ENCODE measurements at regions of chr19 and their contacts with region 1.

Region 1: GRCh38 chr19:46487802-46488445 is 7.7 kb downstream of the PNMA8B start:
- DNase-seq: peak; percentile 83
- H3K4me3 ChIP-seq: peak overlapping the region; percentile 37
- H3K27ac ChIP-seq: no peak overlapping the region
- H3K4me1 ChIP-seq: no peaks in the 10 kb centered on the region
- H3K27me3 ChIP-seq: no peaks in the 10 kb centered on the region
- CTCF ChIP-seq: peak; percentile 97

Region 2: GRCh38 chr19:46271481-46272197 is 216.3 kb before region 1 on chr19:
- CTCF ChIA-PET with region 1: no interaction called
- POLR2A ChIA-PET with region 1: interaction called, 10 read pairs
- intact Hi-C with region 1: no loop called
- DNase-seq: no peak
- H3K4me3 ChIP-seq: no peak overlapping the region
- H3K27ac ChIP-seq: no peak overlapping the region
- H3K4me1 ChIP-seq: no peaks in the 10 kb centered on the region
- H3K27me3 ChIP-seq: no peaks in the 10 kb centered on the region
- CTCF ChIP-seq: no peak

Region 3: GRCh38 chr19:46283771-46284170 is 204.2 kb before region 1 on chr19:
- CTCF ChIA-PET with region 1: interaction called, 14 read pairs
- POLR2A ChIA-PET with region 1: no interaction called
- intact Hi-C with region 1: loop called (anchors 10 kb)
- DNase-seq: peak; percentile 47
- H3K4me3 ChIP-seq: no peak overlapping the region
- H3K27ac ChIP-seq: no peak overlapping the region
- H3K4me1 ChIP-seq: no peaks in the 10 kb centered on the region
- H3K27me3 ChIP-seq: no peaks in the 10 kb centered on the region
- CTCF ChIP-seq: no peak

Region 4: GRCh38 chr19:46288896-46289588 is 198.9 kb before region 1 on chr19:
- CTCF ChIA-PET with region 1: no interaction called
- POLR2A ChIA-PET with region 1: no interaction called
- intact Hi-C with region 1: loop called (anchors 10 kb)
- DNase-seq: peak; percentile 68
- H3K4me3 ChIP-seq: no peak overlapping the region
- H3K27ac ChIP-seq: no peak overlapping the region
- H3K4me1 ChIP-seq: no peaks in the 10 kb centered on the region
- H3K27me3 ChIP-seq: no peaks in the 10 kb centered on the region
- CTCF ChIP-seq: no peak

Region 5: GRCh38 chr19:46404055-46404752 is 83.7 kb before region 1 on chr19:
- CTCF ChIA-PET with region 1: interaction called, 11 read pairs
- POLR2A ChIA-PET with region 1: no interaction called
- intact Hi-C with region 1: loop called (anchors 1 kb)
- DNase-seq: peak; percentile 71
- H3K4me3 ChIP-seq: peak overlapping the region; percentile 37
- H3K27ac ChIP-seq: peak overlapping the region; percentile 15
- H3K4me1 ChIP-seq: peaks cover 20% of the 10 kb centered on the region
- H3K27me3 ChIP-seq: no peaks in the 10 kb centered on the region
- CTCF ChIP-seq: peak; percentile 45; the same call in 1 of the 2 replicates